Mammary epithelial cell (primary cell): ENCODE measurements at regions of chr15 and their contacts with region 1.

Region 1: DNA sequence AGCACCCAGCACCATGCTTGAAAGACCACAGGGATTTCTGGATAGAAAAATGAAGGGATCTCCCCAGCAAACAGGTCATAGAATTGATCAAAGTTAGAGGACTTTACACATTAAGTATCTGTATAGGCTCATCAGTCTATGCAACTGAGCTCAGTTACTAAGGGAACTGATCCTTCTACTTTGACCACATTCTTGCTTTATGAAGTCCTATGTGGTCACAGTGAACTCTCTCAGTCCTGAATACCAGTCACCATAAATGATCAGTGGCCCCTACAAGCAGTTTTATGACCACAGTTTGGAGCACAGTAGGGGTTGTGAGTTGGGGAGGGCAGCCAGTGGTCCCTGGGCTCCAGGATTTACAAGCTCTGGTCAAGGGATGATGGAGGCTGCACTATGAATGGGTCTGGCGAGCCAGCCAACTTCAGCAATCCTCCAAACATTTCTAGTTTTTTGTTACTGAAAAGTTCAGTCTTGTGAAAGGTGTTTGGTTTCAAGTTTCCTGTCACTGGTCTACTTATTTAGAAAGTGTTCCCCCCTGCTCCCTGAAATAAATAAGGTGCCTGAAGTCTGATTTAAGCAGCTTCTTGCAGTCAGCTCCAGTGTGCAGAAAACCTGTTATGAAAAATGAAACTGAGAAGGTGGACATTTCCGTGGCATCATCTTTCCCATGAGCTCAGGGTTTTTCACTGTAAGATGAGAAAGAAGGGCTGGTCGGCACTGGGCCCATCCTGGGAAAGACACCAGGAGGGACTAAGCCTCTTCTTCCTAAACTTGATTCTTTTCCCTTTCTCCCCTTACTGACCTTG is 75.5 kb downstream of the DAPK2 start:
- DNase-seq: no peak
- H3K4me3 ChIP-seq: no peak overlapping the region
- H3K27ac ChIP-seq: no peak overlapping the region
- H3K4me1 ChIP-seq: peaks cover 17% of the 10 kb centered on the region
- H3K27me3 ChIP-seq: no peaks in the 10 kb centered on the region
- CTCF ChIP-seq: no peak

Region 2: GRCh38 chr15:63945007-63945788 is 25.6 kb before region 1 on chr15:
- CTCF ChIA-PET with region 1: no interaction called
- dilution Hi-C with region 1: no loop called
- in situ Hi-C with region 1: no loop called
- intact Hi-C with region 1: no loop called
- DNase-seq: peak; percentile 61
- H3K4me3 ChIP-seq: no peak overlapping the region
- H3K27ac ChIP-seq: peak overlapping the region; percentile 41
- H3K4me1 ChIP-seq: peaks cover 20% of the 10 kb centered on the region
- H3K27me3 ChIP-seq: no peaks in the 10 kb centered on the region
- CTCF ChIP-seq: peak; percentile 97 to 99

Region 3: GRCh38 chr15:64010719-64011118 is 39.9 kb after region 1 on chr15:
- CTCF ChIA-PET with region 1: no interaction called
- dilution Hi-C with region 1: loop called (anchors 5 kb)
- in situ Hi-C with region 1: no loop called
- intact Hi-C with region 1: no loop called
- DNase-seq: peak; percentile 95
- H3K4me3 ChIP-seq: no peak overlapping the region
- H3K27ac ChIP-seq: peak overlapping the region; percentile 74
- H3K4me1 ChIP-seq: peaks cover 56% of the 10 kb centered on the region
- H3K27me3 ChIP-seq: no peaks in the 10 kb centered on the region
- CTCF ChIP-seq: no peak

Region 4: GRCh38 chr15:64841258-64842095 is 870.7 kb after region 1 on chr15 and contains the start of gene PLEKHO2:
- CTCF ChIA-PET with region 1: no interaction called
- dilution Hi-C with region 1: no loop called
- in situ Hi-C with region 1: no loop called
- intact Hi-C with region 1: no loop called
- DNase-seq: peak; percentile 87
- H3K4me3 ChIP-seq: peak within 1 kb of the TSS; percentile 60 to 93 (median 86)
- H3K27ac ChIP-seq: peak within 1 kb of the TSS; percentile 61
- H3K4me1 ChIP-seq: peaks cover 36% of the 10 kb centered on the region
- H3K27me3 ChIP-seq: no peaks in the 10 kb centered on the region
- CTCF ChIP-seq: no peak
- total RNA-seq, gene PLEKHO2: 6.0 to 7.5 TPM